GM12878 (cell line): ENCODE measurements at regions of chr10 and their contacts with region 1.

Region 1: GRCh38 chr10:117663750-117664149 is 121.2 kb downstream of the EMX2 start:
- DNase-seq: peak; percentile 83
- ATAC-seq: peak; percentile 99
- H3K4me3 ChIP-seq: no peak overlapping the region
- H3K27ac ChIP-seq: no peak overlapping the region; the same call in 1 of the 2 replicates
- H3K4me1 ChIP-seq: peaks cover 8% of the 10 kb centered on the region
- H3K27me3 ChIP-seq: no peaks in the 10 kb centered on the region
- CTCF ChIP-seq: no peak
- EP300 ChIP-seq: peak; percentile 89 to 99
- POLR2A ChIP-seq: no peak
- RAD21 ChIP-seq: peak; percentile 18; the same call in 1 of the 2 replicates

Region 2: DNA sequence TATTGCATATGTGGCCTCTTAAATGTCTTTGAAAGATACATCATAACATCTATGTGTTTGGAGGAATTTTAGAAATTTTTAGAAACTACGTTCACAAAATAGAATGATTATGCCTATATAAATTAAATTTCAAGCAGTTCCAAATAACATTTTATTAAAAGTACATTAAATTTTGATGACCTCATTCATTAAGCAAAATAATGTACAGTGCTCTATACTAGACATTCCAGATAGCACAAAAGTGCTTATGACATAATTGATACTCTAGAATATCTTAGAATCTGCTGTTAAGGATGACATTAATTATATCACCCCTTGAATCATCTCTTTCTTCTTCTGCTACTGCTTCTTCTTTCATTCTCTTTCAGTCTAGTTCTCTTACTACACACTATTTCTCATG is 1919.7 kb before region 1 on chr10:
- CTCF ChIA-PET with region 1: no interaction called
- POLR2A ChIA-PET with region 1: no interaction called
- RAD21 ChIA-PET with region 1: no interaction called
- SMC1A ChIA-PET with region 1: no interaction called
- in situ Hi-C with region 1: no loop called
- intact Hi-C with region 1: no loop called
- DNase-seq: no peak
- ATAC-seq: no peak
- H3K4me3 ChIP-seq: no peak overlapping the region
- H3K27ac ChIP-seq: no peak overlapping the region
- H3K4me1 ChIP-seq: no peaks in the 10 kb centered on the region
- H3K27me3 ChIP-seq: no peaks in the 10 kb centered on the region
- CTCF ChIP-seq: no peak
- EP300 ChIP-seq: no peak
- POLR2A ChIP-seq: no peak
- RAD21 ChIP-seq: no peak

Region 3: GRCh38 chr10:117574498-117575146 is 89.1 kb before region 1 on chr10:
- CTCF ChIA-PET with region 1: no interaction called
- POLR2A ChIA-PET with region 1: no interaction called
- RAD21 ChIA-PET with region 1: no interaction called
- SMC1A ChIA-PET with region 1: no interaction called
- in situ Hi-C with region 1: no loop called
- intact Hi-C with region 1: no loop called
- DNase-seq: no peak
- ATAC-seq: no peak
- H3K4me3 ChIP-seq: no peak overlapping the region
- H3K27ac ChIP-seq: no peak overlapping the region
- H3K4me1 ChIP-seq: no peaks in the 10 kb centered on the region
- H3K27me3 ChIP-seq: no peaks in the 10 kb centered on the region; a peak in 1 of 4 replicates
- CTCF ChIP-seq: no peak
- EP300 ChIP-seq: no peak
- POLR2A ChIP-seq: no peak
- RAD21 ChIP-seq: no peak

Region 4: GRCh38 chr10:117597216-117597615 is 66.5 kb before region 1 on chr10:
- CTCF ChIA-PET with region 1: no interaction called
- POLR2A ChIA-PET with region 1: no interaction called
- RAD21 ChIA-PET with region 1: no interaction called
- SMC1A ChIA-PET with region 1: no interaction called
- in situ Hi-C with region 1: no loop called
- intact Hi-C with region 1: no loop called
- DNase-seq: no peak
- ATAC-seq: no peak
- H3K4me3 ChIP-seq: no peak overlapping the region
- H3K27ac ChIP-seq: no peak overlapping the region
- H3K4me1 ChIP-seq: no peaks in the 10 kb centered on the region
- H3K27me3 ChIP-seq: peaks cover 2 to 3% of the 10 kb centered on the region in 2 experiments; a peak in 3 of 4 replicates
- CTCF ChIP-seq: no peak
- EP300 ChIP-seq: no peak
- POLR2A ChIP-seq: no peak
- RAD21 ChIP-seq: no peak

Region 5: DNA sequence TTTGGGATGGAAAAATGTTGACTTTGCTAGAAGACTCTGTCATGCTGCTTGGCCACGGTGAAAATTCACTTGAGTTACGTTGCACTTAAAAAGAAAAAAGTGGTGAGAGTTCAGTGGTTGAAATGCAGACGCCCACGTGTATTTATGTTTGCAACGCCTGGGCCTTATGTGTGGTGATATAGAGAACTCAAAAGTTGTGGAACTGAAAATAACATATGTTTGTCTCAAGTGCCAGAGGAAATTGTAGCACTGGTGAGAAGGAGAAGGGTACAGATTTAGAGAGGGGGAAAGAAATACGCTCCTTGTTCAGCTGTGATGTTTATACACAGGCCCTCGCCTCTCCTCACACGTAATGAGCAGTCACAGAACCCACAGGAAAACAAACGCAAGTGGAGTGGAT is 47.6 kb before region 1 on chr10:
- CTCF ChIA-PET with region 1: interaction called, 5 read pairs
- POLR2A ChIA-PET with region 1: interaction called, 3 read pairs
- RAD21 ChIA-PET with region 1: interaction called, 12 read pairs
- SMC1A ChIA-PET with region 1: interaction called, 300 read pairs
- in situ Hi-C with region 1: no loop called
- intact Hi-C with region 1: loop called (anchors 2 kb)
- DNase-seq: peak; percentile 23
- ATAC-seq: peak; percentile 76
- H3K4me3 ChIP-seq: no peak overlapping the region
- H3K27ac ChIP-seq: no peak overlapping the region
- H3K4me1 ChIP-seq: peaks cover 7% of the 10 kb centered on the region
- H3K27me3 ChIP-seq: no peaks in the 10 kb centered on the region
- CTCF ChIP-seq: no peak
- EP300 ChIP-seq: peak in 1 of 2 experiments; percentile 78; a peak in 1 of 4 replicates
- POLR2A ChIP-seq: no peak
- RAD21 ChIP-seq: no peak

Region 6: DNA sequence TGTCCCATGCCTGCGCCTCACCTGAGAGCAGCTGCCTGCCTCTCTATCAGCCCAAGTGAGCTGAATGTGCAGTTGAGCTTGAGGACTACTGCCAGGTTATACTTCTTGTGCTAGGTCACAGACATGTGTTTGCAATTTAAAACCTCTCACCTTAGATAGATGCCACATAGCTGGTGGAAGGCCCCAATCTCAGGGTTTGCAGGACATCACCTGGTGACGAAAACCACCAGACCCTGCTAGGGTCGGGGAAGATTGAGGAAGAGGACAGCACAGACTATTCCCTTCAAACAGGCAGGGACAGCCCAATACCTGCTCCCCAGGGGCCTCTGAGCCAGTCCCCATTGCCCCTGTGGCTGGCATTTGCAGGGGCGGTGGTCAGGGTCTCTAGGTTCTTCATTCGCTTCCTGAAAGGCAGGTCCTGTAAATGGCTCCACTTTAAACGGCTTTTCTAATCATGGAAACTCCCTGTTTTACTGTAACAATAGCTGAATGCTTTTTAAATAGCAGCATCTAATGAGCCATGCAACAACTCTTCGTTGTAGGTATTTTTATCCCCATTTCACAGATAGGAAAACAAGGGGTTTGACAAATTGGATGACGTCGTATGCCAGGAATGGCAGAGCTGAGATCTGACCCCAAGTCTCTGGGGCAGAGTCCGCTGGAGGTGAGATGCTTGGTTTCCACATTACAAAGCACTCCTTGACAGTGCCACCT is 41.1 kb before region 1 on chr10:
- CTCF ChIA-PET with region 1: no interaction called
- POLR2A ChIA-PET with region 1: interaction called, 5 read pairs
- RAD21 ChIA-PET with region 1: interaction called, 12 read pairs
- SMC1A ChIA-PET with region 1: interaction called, 300 read pairs
- in situ Hi-C with region 1: no loop called
- intact Hi-C with region 1: loop called (anchors 2 kb)
- DNase-seq: no peak
- ATAC-seq: peak; percentile 71
- H3K4me3 ChIP-seq: no peak overlapping the region
- H3K27ac ChIP-seq: no peak overlapping the region
- H3K4me1 ChIP-seq: no peaks in the 10 kb centered on the region
- H3K27me3 ChIP-seq: no peaks in the 10 kb centered on the region
- CTCF ChIP-seq: no peak
- EP300 ChIP-seq: peak in 1 of 2 experiments; percentile 20; a peak in 2 of 4 replicates
- POLR2A ChIP-seq: no peak
- RAD21 ChIP-seq: no peak